ENCODE measurements at regions of chr2 and their contacts with region 1.

Region 1: DNA sequence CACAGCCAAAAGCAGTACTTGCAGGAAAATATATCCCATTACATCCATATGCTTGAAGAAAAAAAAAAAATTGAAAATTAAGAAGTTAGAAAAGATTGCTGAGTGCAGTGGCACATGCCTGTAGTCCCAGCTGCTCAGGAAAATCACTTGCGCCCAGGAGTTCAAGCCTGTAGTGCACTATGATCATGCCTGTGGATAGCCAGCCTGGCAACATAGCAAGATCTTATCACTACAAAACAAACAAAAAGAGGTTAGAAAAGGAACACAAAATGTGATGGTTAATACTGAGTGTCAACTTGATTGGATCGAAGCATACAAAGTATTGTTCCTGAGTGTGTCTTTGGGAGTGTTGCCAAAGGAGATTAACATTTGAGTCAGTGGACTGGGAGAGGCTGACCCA is 361.9 kb downstream of the NYAP2 start:
- DNase-seq: no peak
- H3K4me3 ChIP-seq: no peak overlapping the region
- H3K27ac ChIP-seq: no peak overlapping the region
- H3K4me1 ChIP-seq: no peaks in the 10 kb centered on the region
- H3K27me3 ChIP-seq: no peaks in the 10 kb centered on the region
- CTCF ChIP-seq: no peak

Region 2: GRCh38 chr2:225725726-225726125 is 35.7 kb before region 1 on chr2:
- CTCF ChIA-PET with region 1: no interaction called
- POLR2A ChIA-PET with region 1: interaction called, 10 read pairs
- intact Hi-C with region 1: no loop called
- DNase-seq: no peak
- H3K4me3 ChIP-seq: no peak overlapping the region
- H3K27ac ChIP-seq: no peak overlapping the region
- H3K4me1 ChIP-seq: no peaks in the 10 kb centered on the region
- H3K27me3 ChIP-seq: no peaks in the 10 kb centered on the region
- CTCF ChIP-seq: no peak